ENCODE measurements at regions of chr5 and their contacts with region 1.

Region 1: DNA sequence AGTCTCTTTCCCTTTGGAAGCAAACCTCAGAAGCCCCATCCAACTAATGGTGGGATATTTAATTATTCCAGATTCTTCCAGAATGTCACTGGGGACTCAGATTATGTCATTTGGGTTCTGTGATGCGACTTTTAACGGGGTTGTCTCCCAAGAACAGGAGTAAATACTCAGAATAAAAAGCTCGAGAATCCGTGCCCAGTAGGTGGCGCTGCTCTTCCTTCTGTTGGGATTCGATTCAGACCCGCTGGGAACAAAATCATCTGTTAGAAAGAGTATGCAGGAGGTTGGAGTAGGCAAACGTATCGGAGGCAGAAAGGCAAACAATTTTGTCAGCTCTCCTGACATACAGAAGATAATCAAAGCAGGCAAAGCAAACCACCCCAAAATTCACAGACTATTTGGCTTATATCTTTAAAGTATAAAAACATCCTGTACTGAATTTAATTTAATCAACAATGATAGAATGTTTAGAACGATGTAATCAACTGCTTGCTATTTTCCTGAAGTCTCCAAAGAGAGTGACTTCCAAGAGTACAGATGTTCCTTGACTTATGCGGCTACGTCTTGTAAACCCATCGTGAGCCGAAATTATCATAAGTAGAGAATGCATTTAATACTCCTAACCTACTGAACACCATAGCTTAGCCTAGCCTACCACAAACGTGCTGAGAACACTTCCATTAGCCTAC is 169.8 kb upstream of the RAI14 start:
- DNase-seq: peak; percentile 36
- ATAC-seq: peak; percentile 18
- H3K4me3 Mint-ChIP-seq: no peak overlapping the region
- H3K27ac Mint-ChIP-seq: no peak overlapping the region
- H3K4me1 Mint-ChIP-seq: peaks cover 3% of the 10 kb centered on the region
- H3K27me3 Mint-ChIP-seq: peaks cover 14% of the 10 kb centered on the region
- CTCF ChIP-seq: peak; percentile 71

Region 2: DNA sequence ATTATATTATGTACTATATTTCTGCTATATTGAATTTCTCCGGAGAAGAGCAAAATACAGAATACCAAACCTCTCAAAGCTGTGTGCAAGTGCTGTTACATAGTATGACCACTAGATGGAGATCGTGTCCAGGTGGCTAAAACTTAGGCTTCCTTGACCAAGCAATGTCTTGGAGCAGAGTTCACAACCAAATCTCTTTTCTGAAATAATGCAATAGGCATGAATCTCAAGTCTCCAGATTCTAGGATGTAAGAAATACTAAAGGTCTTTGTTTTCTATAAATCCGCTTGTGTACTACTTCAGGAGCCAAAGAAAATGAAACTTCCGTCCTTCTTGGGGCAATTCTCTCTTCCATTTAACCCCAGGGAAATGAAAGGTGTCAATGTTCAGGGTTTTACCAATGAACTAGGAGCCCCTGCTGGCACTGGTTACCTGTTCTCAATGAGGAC is 11.7 kb before region 1 on chr5:
- CTCF ChIA-PET with region 1: interaction called, 17 read pairs
- POLR2A ChIA-PET with region 1: no interaction called
- intact Hi-C with region 1: no loop called
- DNase-seq: no peak
- ATAC-seq: peak; percentile 70
- H3K4me3 Mint-ChIP-seq: no peak overlapping the region
- H3K27ac Mint-ChIP-seq: no peak overlapping the region
- H3K4me1 Mint-ChIP-seq: no peaks in the 10 kb centered on the region
- H3K27me3 Mint-ChIP-seq: peaks cover 8% of the 10 kb centered on the region
- CTCF ChIP-seq: peak; percentile 88

Region 3: GRCh38 chr5:34522599-34523386 is 36.5 kb after region 1 on chr5:
- CTCF ChIA-PET with region 1: interaction called, 9 read pairs
- POLR2A ChIA-PET with region 1: no interaction called
- intact Hi-C with region 1: loop called (anchors 1 kb)
- DNase-seq: no peak
- ATAC-seq: peak; percentile 71
- H3K4me3 Mint-ChIP-seq: no peak overlapping the region
- H3K27ac Mint-ChIP-seq: no peak overlapping the region
- H3K4me1 Mint-ChIP-seq: peaks cover 2% of the 10 kb centered on the region
- H3K27me3 Mint-ChIP-seq: no peaks in the 10 kb centered on the region
- CTCF ChIP-seq: no peak

Region 4: DNA sequence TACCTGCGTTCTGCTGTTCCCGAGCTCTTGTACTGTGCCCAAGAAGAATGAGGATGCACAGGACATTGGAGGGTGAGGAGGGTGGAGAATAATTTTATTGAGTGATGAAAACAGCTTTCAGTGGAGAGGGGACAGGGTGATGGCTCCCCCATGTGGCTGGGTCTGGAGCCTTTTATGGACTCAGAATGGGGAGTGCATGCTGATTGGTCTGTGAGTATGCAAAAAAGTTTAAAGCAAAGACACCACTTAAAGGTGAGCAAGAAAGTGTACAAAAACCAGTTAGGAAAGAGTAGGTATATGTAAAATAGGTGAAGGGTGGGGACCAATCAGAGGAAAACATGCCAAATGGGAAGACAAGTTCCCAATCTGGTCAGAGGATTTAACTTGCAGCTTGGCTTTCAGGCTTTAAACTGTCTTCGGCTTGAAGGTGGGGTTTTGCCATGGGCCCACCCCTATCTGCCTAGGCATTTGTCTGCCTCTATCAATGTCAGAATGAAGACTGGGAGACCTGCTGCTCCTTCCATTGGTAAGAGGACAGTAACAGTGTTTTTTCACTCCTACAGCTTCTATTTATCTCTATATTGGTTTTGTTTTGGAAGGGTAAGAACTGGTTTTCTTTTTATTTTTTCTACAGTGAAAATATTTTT is 51.8 kb after region 1 on chr5:
- CTCF ChIA-PET with region 1: interaction called, 4 read pairs
- POLR2A ChIA-PET with region 1: no interaction called
- intact Hi-C with region 1: loop called (anchors 1 kb)
- DNase-seq: no peak
- ATAC-seq: no peak
- H3K4me3 Mint-ChIP-seq: no peak overlapping the region
- H3K27ac Mint-ChIP-seq: no peak overlapping the region
- H3K4me1 Mint-ChIP-seq: no peaks in the 10 kb centered on the region
- H3K27me3 Mint-ChIP-seq: peaks cover 25% of the 10 kb centered on the region
- CTCF ChIP-seq: no peak

Region 5: DNA sequence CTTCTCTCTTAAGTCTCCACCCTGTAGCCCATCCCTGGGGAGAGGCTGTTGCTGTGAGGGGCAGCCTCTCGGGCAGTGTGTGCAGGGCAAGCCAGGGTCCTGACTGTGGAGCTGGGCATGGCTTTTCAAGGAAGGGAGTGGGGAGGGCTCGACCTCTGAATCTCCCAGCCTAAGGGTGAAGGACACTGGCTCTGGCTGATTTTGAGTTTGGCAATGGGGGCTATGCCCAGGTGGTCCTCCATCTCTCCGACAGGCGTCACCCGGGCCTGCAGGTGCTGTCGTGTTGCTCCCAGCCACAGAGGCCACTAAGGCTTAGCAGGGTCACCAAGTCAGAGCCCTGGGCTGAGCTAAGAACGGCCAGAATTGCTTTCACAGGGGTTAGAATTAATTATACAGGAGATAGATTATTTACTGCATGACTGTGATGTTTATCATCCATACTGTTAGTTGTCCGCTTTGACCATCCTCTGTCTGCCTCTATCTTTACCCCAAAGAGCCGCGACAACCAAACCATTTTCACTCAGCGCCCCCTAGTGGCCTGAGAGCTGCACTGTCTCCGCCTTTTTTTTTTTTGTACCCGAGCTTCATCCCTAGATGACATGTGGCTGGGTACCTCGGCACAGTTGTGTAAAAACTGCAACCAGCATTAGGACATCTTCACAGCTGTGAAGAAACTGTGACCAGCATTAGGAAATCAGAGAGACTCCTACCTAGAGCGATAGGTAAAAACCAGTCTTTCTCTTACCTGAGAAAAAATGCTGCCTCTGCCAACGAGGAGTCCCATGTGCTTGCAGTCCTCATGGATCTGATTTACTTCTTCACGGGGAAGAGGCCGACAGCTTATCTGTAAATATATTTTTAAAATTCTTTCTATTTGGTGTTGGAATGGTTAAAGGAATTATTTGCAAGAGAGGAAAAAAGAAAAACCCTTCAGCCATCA is 517.0 kb after region 1 on chr5:
- CTCF ChIA-PET with region 1: interaction called, 11 read pairs
- POLR2A ChIA-PET with region 1: no interaction called
- intact Hi-C with region 1: loop called (anchors 1 kb)
- DNase-seq: no peak
- ATAC-seq: peak; percentile 40
- H3K4me3 Mint-ChIP-seq: no peak overlapping the region
- H3K27ac Mint-ChIP-seq: no peak overlapping the region
- H3K4me1 Mint-ChIP-seq: no peaks in the 10 kb centered on the region
- H3K27me3 Mint-ChIP-seq: peaks cover 14% of the 10 kb centered on the region
- CTCF ChIP-seq: peak; percentile 38

Region 6: DNA sequence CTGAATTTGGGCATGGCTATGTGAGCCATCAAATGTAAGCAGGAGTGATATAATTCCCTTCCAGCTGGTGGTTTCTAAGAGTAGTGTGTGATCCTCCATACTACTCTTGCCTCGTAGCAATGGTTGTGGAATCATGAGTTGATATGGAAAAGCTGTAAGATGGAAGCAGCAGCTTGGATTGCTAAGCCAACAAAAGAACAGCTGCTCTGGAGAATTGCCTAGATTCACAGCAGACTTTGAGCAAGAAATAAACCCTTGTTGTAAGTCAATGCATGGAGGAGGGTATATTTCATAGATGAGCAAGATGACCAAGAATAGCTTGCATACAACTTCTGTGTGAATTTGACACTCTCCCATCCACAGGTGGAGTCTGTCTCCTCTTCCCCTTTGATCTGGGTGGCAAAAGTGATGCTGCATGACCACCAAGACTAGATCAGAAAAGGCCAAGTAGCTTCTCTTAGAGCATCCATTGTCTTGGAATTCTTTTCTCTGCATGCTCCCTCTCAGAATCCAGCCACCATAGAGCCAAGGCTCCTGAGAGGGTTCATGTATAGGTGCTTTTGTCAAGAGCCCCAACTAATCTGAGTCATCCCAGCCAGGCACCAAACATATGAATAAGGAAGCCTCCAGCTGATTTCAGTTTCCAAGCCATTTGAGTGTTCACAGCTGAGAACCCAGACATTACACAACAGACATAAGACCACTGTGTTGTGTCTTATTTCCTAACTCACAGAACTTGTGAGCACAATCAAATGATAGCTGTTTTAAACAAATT is 665.0 kb after region 1 on chr5:
- CTCF ChIA-PET with region 1: no interaction called
- POLR2A ChIA-PET with region 1: no interaction called
- intact Hi-C with region 1: no loop called
- DNase-seq: no peak
- ATAC-seq: no peak
- H3K4me3 Mint-ChIP-seq: no peak overlapping the region
- H3K27ac Mint-ChIP-seq: no peak overlapping the region
- H3K4me1 Mint-ChIP-seq: peaks cover 7% of the 10 kb centered on the region
- H3K27me3 Mint-ChIP-seq: peaks cover 4% of the 10 kb centered on the region
- CTCF ChIP-seq: no peak